Dendritic cell treated with granulocyte-macrophage colony-stimulating factor and Interleukin-4, amounts not matched to agents 40 ng/mL and 50 ng/mL, for 4 days (primary cell): ENCODE measurements at regions of chr14 and their contacts with region 1.

Region 1: DNA sequence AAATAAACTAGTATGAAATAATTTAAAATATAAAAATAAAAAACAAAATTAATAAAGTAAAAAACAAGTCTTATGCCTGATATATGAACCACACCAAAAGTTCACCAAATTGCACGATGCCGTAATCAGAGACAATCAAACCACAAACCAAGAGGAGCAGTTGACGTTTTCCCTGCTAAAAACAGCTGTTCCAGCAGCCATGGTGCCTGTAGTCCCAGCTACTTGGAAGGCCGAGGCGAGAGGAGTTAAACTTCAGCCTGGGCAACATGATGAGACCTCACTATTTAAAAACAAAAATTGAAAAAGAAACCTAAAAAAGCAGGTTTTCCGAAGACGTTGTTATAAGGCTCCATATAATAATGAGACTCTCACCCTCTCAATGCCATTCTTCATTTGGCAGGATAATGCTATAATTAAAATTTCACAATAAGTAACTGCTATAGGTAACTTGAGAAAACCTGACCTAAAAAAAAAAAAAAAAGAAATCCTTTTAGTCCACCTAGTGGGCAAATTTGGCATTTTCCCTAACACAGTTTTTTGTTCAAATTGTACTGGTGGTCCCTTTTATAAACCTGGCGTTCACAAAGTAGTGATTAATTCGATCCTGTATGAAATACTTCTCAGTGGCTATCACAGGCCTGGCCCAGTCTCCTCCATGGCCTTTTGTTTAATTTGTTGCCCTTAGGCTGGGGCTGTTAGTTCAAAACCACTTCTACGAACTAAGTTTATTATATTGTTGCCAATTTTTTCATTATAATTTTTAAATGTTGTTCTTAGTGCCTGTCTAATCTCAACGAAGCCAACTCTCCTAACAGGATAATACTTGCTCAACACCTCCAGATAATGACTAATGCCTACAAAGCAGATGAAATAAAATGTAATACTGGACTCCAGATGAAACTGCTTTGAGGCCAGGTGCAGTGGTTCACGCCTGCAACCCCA is 62.1 kb downstream of the TNFAIP2 start:
- H3K4me3 Mint-ChIP-seq: no peak overlapping the region
- H3K27ac Mint-ChIP-seq: no peak overlapping the region
- H3K4me1 Mint-ChIP-seq: peaks cover 6% of the 10 kb centered on the region
- H3K27me3 Mint-ChIP-seq: peaks cover 52% of the 10 kb centered on the region

Region 2: DNA sequence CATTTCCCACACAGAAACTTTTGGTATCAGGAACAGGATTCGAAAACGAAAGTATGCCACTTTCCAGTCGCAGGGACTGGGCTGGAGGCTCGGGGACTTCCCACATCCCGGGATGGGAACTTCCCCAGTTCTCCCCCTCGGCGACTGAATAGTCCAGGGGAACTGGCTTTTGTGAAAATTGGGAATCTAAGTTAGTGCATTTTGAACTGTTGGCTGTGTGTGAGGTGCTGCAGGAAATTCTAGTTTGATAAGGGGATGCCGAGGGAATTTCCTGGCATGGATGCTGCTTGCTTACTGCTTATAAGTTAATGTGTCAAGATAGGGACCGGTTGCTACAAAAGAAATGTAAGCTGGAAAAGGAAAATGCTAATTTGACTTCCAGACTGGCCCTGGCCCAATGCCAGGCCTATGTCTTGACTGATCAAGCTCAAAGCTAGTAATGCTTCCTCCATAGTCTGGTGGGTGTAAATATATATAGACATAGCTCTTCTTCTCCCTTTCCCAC is 75.3 kb after region 1 on chr14:
- intact Hi-C with region 1: loop called (anchors 5 kb)
- H3K4me3 Mint-ChIP-seq: peak overlapping the region; percentile 78
- H3K27ac Mint-ChIP-seq: peak overlapping the region; percentile 54
- H3K4me1 Mint-ChIP-seq: peaks cover 12% of the 10 kb centered on the region
- H3K27me3 Mint-ChIP-seq: peaks cover 55% of the 10 kb centered on the region